ENCODE measurements at regions of chr1 and their contacts with region 1.

Region 1: DNA sequence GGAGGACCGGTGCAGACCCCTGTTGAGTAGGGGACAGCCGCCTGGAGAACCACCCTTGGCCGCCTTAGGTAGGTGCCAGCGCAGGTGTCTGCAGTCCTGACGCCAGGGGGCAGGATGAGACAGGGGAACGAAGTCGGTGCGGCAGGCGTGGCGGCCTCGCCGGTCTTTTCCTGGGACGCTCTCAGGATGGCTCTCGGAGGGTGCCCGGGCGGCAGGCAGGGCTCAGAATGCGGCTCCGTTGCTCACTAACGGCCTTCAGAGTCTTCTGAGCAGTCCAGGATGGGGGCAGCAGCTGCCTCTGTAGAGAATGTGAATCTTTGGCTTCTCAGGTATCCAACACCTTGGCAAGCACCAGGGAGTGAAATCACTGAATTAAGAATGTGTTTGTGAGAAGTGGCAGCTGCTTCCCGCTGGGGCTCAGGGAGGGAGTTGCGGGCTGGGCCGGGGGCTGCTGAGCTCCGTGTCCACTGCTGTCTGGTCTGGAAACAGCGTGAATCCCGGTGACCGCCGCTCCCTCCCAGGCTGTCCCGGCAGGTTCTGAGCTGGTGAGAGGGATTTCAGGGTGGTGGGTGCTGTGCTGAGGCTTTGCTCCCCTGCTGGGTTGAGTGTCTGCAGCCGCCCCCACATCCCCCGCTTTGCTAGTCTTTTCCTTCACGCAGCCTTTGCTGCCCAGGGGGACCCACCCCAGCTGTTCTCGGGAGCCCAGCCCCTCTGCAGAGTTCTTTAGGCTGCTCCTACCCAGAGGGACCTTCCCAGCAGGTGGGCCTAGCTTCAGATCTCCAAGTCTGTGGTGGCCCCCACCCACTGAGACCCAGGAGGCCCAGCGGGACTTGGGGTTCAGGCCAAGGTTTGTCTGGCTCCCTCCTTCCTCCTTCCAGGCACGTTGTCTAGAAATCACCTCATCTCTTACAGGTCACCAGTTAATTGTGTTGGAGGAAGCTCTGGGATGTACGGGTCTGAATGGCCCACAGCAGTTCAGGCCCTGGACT is 11.1 kb upstream of the C1orf174 start:
- DNase-seq: peak; percentile 77
- H3K4me3 Mint-ChIP-seq: peak overlapping the region; percentile 33
- H3K27ac Mint-ChIP-seq: no peak overlapping the region
- H3K4me1 Mint-ChIP-seq: peaks cover 5% of the 10 kb centered on the region
- H3K27me3 Mint-ChIP-seq: peaks cover 4% of the 10 kb centered on the region
- CTCF ChIP-seq: peak; percentile 90

Region 2: DNA sequence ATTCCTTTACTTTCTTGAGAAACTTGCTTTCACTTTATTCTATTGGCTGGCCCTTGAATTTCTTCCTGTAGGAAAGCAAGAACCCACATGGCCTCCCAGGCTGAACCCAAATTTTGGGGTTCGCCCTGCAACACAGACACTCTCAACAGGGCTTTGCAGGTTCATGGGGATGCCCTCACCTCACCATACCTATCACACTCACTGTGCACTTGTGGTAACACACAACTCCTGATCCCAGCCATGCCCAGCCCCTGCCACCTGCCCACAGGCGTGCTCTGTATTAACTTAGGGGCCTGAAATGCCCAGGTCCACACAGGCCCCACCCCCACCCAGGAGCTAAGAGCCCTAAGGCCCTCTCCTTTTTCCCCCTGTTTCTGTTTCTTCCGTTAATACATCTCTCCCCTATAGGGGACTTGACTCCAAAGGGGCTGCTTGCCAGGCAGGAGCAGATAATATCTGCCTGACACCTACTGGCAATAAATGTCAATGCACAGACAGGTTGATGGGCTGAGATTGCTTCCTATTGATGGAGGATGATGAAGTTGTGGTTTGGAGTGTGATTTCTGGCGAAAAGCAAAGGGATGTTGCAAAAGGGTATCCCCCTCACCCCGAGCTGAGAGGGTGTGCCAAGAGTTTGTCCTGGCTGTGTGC is 914.8 kb after region 1 on chr1:
- CTCF ChIA-PET with region 1: interaction called, 4 read pairs
- POLR2A ChIA-PET with region 1: no interaction called
- intact Hi-C with region 1: loop called (anchors 10 kb)
- DNase-seq: peak; percentile 40
- H3K4me3 Mint-ChIP-seq: no peak overlapping the region
- H3K27ac Mint-ChIP-seq: no peak overlapping the region
- H3K4me1 Mint-ChIP-seq: no peaks in the 10 kb centered on the region
- H3K27me3 Mint-ChIP-seq: no peaks in the 10 kb centered on the region
- CTCF ChIP-seq: no peak

Region 3: GRCh38 chr1:5620990-5621389 is 1709.8 kb after region 1 on chr1:
- CTCF ChIA-PET with region 1: interaction called, 4 read pairs
- POLR2A ChIA-PET with region 1: no interaction called
- intact Hi-C with region 1: loop called (anchors 5 kb)
- DNase-seq: peak; percentile 43
- H3K4me3 Mint-ChIP-seq: no peak overlapping the region
- H3K27ac Mint-ChIP-seq: no peak overlapping the region
- H3K4me1 Mint-ChIP-seq: peaks cover 24% of the 10 kb centered on the region
- H3K27me3 Mint-ChIP-seq: peaks cover 15% of the 10 kb centered on the region
- CTCF ChIP-seq: peak; percentile 46

Region 4: GRCh38 chr1:5751833-5752745 is 1840.9 kb after region 1 on chr1:
- CTCF ChIA-PET with region 1: interaction called, 3 read pairs
- POLR2A ChIA-PET with region 1: no interaction called
- intact Hi-C with region 1: loop called (anchors 5 kb)
- DNase-seq: no peak
- H3K4me3 Mint-ChIP-seq: no peak overlapping the region
- H3K27ac Mint-ChIP-seq: no peak overlapping the region
- H3K4me1 Mint-ChIP-seq: no peaks in the 10 kb centered on the region
- H3K27me3 Mint-ChIP-seq: peaks cover 44% of the 10 kb centered on the region
- CTCF ChIP-seq: no peak

Measured in MCF 10A (cell line).